ENCODE measurements at regions of chr18 and their contacts with region 1.

Region 1: GRCh38 chr18:54983041-54983686 is 23.9 kb upstream of the CCDC68 start:
- DNase-seq: peak; percentile 76
- ATAC-seq: peak; percentile 90
- H3K4me3 ChIP-seq: no peak overlapping the region
- H3K27ac ChIP-seq: no peak overlapping the region
- H3K4me1 ChIP-seq: no peaks in the 10 kb centered on the region
- H3K27me3 ChIP-seq: no peaks in the 10 kb centered on the region
- CTCF ChIP-seq: peak; percentile 83
- POLR2A ChIP-seq: no peak
- RAD21 ChIP-seq: peak; percentile 89

Region 2: GRCh38 chr18:54444319-54444914 is 538.7 kb before region 1 on chr18:
- CTCF ChIA-PET with region 1: no interaction called
- POLR2A ChIA-PET with region 1: no interaction called
- dilution Hi-C with region 1: no loop called
- in situ Hi-C with region 1: no loop called
- intact Hi-C with region 1: loop called (anchors 2 kb)
- DNase-seq: peak; percentile 61
- ATAC-seq: peak; percentile 94
- H3K4me3 ChIP-seq: no peak overlapping the region
- H3K27ac ChIP-seq: no peak overlapping the region
- H3K4me1 ChIP-seq: no peaks in the 10 kb centered on the region
- H3K27me3 ChIP-seq: peaks cover 2% of the 10 kb centered on the region
- CTCF ChIP-seq: peak; percentile 73
- POLR2A ChIP-seq: no peak
- RAD21 ChIP-seq: peak; percentile 75

Region 3: GRCh38 chr18:54558609-54559585 is 424.3 kb before region 1 on chr18:
- CTCF ChIA-PET with region 1: no interaction called
- POLR2A ChIA-PET with region 1: no interaction called
- dilution Hi-C with region 1: no loop called
- in situ Hi-C with region 1: loop called (anchors 25 kb)
- intact Hi-C with region 1: loop called (anchors 2 kb)
- DNase-seq: peak; percentile 3
- ATAC-seq: no peak
- H3K4me3 ChIP-seq: no peak overlapping the region
- H3K27ac ChIP-seq: no peak overlapping the region
- H3K4me1 ChIP-seq: no peaks in the 10 kb centered on the region
- H3K27me3 ChIP-seq: no peaks in the 10 kb centered on the region
- CTCF ChIP-seq: peak; percentile 57
- POLR2A ChIP-seq: no peak
- RAD21 ChIP-seq: peak; percentile 42

Region 4: DNA sequence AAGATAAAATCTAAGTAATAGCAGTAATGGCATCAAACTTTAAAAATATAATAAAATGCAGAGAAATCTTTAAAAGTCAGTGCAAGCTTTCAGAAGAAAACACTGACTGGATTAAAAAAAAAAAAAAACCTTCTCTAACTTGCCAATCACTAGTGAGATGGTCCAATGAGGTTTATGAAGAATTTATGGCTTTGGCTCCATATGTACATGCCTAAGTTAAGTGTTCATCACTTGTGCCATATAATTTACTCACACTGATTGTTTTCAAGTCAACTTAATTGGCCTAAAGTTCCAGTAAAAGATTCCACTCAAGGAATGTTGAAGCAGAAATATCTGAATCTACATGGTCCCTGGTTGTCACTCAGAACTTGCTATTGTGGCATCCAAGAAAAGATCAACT is 195.5 kb before region 1 on chr18:
- CTCF ChIA-PET with region 1: no interaction called
- POLR2A ChIA-PET with region 1: no interaction called
- dilution Hi-C with region 1: no loop called
- in situ Hi-C with region 1: no loop called
- intact Hi-C with region 1: no loop called
- DNase-seq: peak; percentile 17
- ATAC-seq: no peak; the same call in 1 of the 2 replicates
- H3K4me3 ChIP-seq: no peak overlapping the region
- H3K27ac ChIP-seq: no peak overlapping the region
- H3K4me1 ChIP-seq: 0 out of 2 replicates have a peak, but pooled peaks cover 1% of the 10 kb centered on the region
- H3K27me3 ChIP-seq: no peaks in the 10 kb centered on the region
- CTCF ChIP-seq: no peak
- POLR2A ChIP-seq: no peak
- RAD21 ChIP-seq: no peak

Region 5: DNA sequence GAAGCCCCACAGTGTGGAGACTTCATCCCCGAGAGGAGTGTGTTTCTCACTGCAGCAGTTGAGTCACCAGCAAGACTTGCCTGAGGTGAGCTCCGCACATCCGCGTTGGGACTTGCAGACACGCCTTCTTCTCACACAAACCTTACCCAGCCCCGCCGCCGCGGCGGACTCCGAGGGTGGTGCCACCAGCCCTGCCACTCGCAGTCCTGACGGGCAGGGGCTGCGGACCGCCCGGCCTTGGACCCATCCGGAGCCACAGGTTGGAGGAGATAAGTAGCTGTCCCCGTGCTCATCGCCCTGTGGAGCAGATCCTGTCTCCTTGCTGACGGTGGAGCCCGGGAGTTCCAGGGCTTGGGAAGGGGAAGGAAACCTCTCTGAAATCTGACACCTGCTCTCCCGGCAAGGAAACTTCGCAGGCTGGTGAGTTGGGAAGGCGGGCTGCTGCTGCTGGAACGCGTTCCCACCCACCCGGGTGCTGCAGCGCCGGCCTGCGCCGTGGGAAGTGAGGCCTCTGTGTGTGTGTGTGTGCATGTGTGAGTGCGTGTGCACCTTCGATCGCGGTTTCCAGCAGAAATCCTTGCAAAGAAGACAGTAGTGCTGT is 154.8 kb before region 1 on chr18 and contains the start of gene RAB27B:
- CTCF ChIA-PET with region 1: no interaction called
- POLR2A ChIA-PET with region 1: no interaction called
- dilution Hi-C with region 1: no loop called
- in situ Hi-C with region 1: no loop called
- intact Hi-C with region 1: loop called (anchors 5 kb)
- DNase-seq: peak; percentile 85
- ATAC-seq: peak; percentile 89
- H3K4me3 ChIP-seq: peak within 1 kb of the TSS; percentile 57
- H3K27ac ChIP-seq: peak within 1 kb of the TSS; percentile 57
- H3K4me1 ChIP-seq: peaks cover 3% of the 10 kb centered on the region; the same call in 1 of the 2 replicates
- H3K27me3 ChIP-seq: no peaks in the 10 kb centered on the region; the same call in 1 of the 2 replicates
- CTCF ChIP-seq: no peak
- POLR2A ChIP-seq: no peak
- RAD21 ChIP-seq: no peak
- total RNA-seq, gene RAB27B: 1.3 and 1.7 TPM in 2 replicates

Region 6: GRCh38 chr18:54860941-54861340 is 122.2 kb before region 1 on chr18:
- CTCF ChIA-PET with region 1: no interaction called
- POLR2A ChIA-PET with region 1: no interaction called
- dilution Hi-C with region 1: no loop called
- in situ Hi-C with region 1: no loop called
- intact Hi-C with region 1: no loop called
- DNase-seq: no peak
- ATAC-seq: no peak
- H3K4me3 ChIP-seq: no peak overlapping the region
- H3K27ac ChIP-seq: no peak overlapping the region
- H3K4me1 ChIP-seq: no peaks in the 10 kb centered on the region
- H3K27me3 ChIP-seq: no peaks in the 10 kb centered on the region
- CTCF ChIP-seq: no peak
- POLR2A ChIP-seq: no peak
- RAD21 ChIP-seq: no peak

Region 7: GRCh38 chr18:55048892-55049291 is 65.7 kb after region 1 on chr18:
- CTCF ChIA-PET with region 1: no interaction called
- POLR2A ChIA-PET with region 1: no interaction called
- dilution Hi-C with region 1: no loop called
- in situ Hi-C with region 1: no loop called
- intact Hi-C with region 1: no loop called
- DNase-seq: peak; percentile 65
- ATAC-seq: peak; percentile 46
- H3K4me3 ChIP-seq: no peak overlapping the region
- H3K27ac ChIP-seq: no peak overlapping the region
- H3K4me1 ChIP-seq: no peaks in the 10 kb centered on the region
- H3K27me3 ChIP-seq: no peaks in the 10 kb centered on the region; the same call in 1 of the 2 replicates
- CTCF ChIP-seq: no peak
- POLR2A ChIP-seq: no peak
- RAD21 ChIP-seq: no peak

Measured in IMR-90 (cell line).